Activated CD4-positive, alpha-beta T cell treated with anti-CD3 and anti-CD28 coated beads for 36 hours (primary cell): ENCODE measurements at regions of chr2 and their contacts with region 1.

Region 1: GRCh38 chr2:84881581-84882414 is 914 bp upstream of the TRABD2A start:
- DNase-seq: peak; percentile 95
- ATAC-seq: peak; percentile 75
- H3K4me3 Mint-ChIP-seq: peak overlapping the region; percentile 82
- H3K27ac Mint-ChIP-seq: peak overlapping the region; percentile 91
- H3K4me1 Mint-ChIP-seq: peaks cover 58% of the 10 kb centered on the region
- H3K27me3 Mint-ChIP-seq: no peaks in the 10 kb centered on the region

Region 2: GRCh38 chr2:84459018-84459943 is 422.5 kb before region 1 on chr2 and contains the start of gene SUCLG1:
- CTCF ChIA-PET with region 1: no interaction called
- POLR2A ChIA-PET with region 1: interaction called, 3 read pairs
- intact Hi-C with region 1: loop called in 1 of 2 experiments (anchors 1 kb)
- DNase-seq: peak; percentile 92
- ATAC-seq: peak; percentile 93
- H3K4me3 Mint-ChIP-seq: peak within 1 kb of the TSS; percentile 94
- H3K27ac Mint-ChIP-seq: peak within 1 kb of the TSS; percentile 98
- H3K4me1 Mint-ChIP-seq: peaks cover 34% of the 10 kb centered on the region
- H3K27me3 Mint-ChIP-seq: no peaks in the 10 kb centered on the region
- total RNA-seq, gene SUCLG1: 60.7 to 68.9 TPM

Region 3: GRCh38 chr2:84516234-84516986 is 365.4 kb before region 1 on chr2 and contains the start of gene DNAH6:
- CTCF ChIA-PET with region 1: no interaction called
- POLR2A ChIA-PET with region 1: no interaction called
- intact Hi-C with region 1: loop called (anchors 5 kb)
- DNase-seq: peak; percentile 93
- ATAC-seq: peak; percentile 100
- H3K4me3 Mint-ChIP-seq: peak within 1 kb of the TSS; percentile 72
- H3K27ac Mint-ChIP-seq: peak within 1 kb of the TSS; percentile 30
- H3K4me1 Mint-ChIP-seq: peaks cover 11% of the 10 kb centered on the region
- H3K27me3 Mint-ChIP-seq: no peaks in the 10 kb centered on the region
- total RNA-seq, gene DNAH6: 1.1 to 1.3 TPM

Region 4: DNA sequence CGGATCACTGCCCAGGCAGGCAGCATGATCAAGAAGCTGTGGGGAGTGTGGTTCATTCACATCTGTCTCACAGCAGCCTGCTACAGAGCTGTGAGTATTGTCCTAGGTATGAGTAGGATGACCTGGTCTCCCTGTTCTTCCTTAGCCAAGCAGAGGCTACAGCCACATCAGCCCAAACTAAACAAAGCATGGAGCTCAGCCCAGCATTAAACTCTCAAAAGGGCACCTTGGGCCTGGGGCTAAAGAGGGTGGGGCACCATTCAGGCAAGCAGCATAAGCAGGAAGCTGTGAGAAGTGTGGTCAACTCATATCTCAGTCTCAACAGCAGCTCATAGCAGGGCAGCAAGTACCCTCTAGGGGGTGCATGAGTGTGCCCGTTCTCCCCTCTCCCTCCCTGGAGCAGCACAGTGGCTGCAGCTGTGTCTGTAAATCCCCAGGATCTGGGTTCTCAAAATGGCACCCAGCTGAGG is 140.5 kb before region 1 on chr2:
- CTCF ChIA-PET with region 1: interaction called, 12 read pairs
- POLR2A ChIA-PET with region 1: no interaction called
- intact Hi-C with region 1: loop called in 1 of 2 experiments (anchors 5 kb)
- DNase-seq: peak; percentile 70
- ATAC-seq: peak; percentile 100
- H3K4me3 Mint-ChIP-seq: no peak overlapping the region
- H3K27ac Mint-ChIP-seq: no peak overlapping the region
- H3K4me1 Mint-ChIP-seq: peaks cover 11% of the 10 kb centered on the region
- H3K27me3 Mint-ChIP-seq: no peaks in the 10 kb centered on the region

Region 5: DNA sequence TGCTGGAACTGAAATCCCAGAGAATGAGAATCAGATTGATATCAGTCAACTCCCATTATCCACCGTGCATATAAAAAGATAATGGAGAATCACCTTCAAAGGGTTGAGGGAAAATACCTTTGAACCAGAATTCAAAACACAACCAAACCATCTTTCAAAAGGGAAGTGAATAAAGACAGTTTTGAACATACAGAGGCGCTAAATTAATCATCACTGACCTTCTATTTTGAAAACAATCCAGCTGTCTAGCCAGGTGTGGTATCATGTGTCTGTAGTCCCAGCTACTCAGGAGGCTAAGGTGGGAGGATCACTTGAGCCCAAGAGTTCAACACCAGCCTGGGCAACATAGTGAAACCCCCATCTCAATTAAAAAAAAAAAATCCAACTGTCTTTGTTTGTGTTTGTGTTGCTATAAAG is 64.6 kb before region 1 on chr2:
- CTCF ChIA-PET with region 1: interaction called, 5 read pairs
- POLR2A ChIA-PET with region 1: interaction called, 3 read pairs
- intact Hi-C with region 1: loop called (anchors 1 to 5 kb)
- DNase-seq: peak; percentile 36
- ATAC-seq: peak; percentile 85
- H3K4me3 Mint-ChIP-seq: peak overlapping the region; percentile 20
- H3K27ac Mint-ChIP-seq: no peak overlapping the region
- H3K4me1 Mint-ChIP-seq: peaks cover 52% of the 10 kb centered on the region
- H3K27me3 Mint-ChIP-seq: no peaks in the 10 kb centered on the region

Region 6: DNA sequence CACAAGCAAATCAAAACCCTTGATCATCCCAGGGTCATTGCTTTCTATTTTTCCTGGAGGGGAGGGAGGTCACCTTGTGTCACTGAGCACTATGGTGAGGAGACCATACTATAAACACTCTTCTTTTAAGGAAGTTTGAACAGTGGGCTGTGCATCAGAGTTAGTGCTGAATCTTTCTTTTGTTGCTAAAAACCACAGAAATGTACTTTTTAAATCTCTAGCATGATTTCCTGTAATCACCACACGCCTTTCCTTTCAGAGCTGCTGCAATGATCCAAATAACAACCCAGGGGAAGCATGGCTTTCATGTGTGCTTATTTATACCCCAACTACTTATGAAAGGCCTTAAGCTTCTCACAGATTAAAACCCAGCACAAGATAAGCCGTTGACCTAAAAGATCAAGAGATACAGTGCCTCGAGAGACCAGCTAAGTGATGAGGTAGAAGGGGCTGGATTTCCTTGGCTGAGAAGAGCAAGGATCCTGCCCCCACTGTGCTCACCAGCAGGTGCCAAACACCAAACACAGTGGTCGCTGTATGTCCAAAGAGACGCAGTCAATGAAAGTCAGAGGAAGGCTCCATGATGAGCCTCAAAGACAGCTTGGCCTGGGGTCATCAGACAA is 35.6 kb before region 1 on chr2:
- CTCF ChIA-PET with region 1: interaction called, 7 read pairs
- POLR2A ChIA-PET with region 1: interaction called, 3 read pairs
- intact Hi-C with region 1: loop called (anchors 2 to 5 kb)
- DNase-seq: peak; percentile 47
- ATAC-seq: peak; percentile 52
- H3K4me3 Mint-ChIP-seq: peak overlapping the region; percentile 12
- H3K27ac Mint-ChIP-seq: peak overlapping the region; percentile 94
- H3K4me1 Mint-ChIP-seq: peaks cover 93% of the 10 kb centered on the region
- H3K27me3 Mint-ChIP-seq: no peaks in the 10 kb centered on the region

Region 7: DNA sequence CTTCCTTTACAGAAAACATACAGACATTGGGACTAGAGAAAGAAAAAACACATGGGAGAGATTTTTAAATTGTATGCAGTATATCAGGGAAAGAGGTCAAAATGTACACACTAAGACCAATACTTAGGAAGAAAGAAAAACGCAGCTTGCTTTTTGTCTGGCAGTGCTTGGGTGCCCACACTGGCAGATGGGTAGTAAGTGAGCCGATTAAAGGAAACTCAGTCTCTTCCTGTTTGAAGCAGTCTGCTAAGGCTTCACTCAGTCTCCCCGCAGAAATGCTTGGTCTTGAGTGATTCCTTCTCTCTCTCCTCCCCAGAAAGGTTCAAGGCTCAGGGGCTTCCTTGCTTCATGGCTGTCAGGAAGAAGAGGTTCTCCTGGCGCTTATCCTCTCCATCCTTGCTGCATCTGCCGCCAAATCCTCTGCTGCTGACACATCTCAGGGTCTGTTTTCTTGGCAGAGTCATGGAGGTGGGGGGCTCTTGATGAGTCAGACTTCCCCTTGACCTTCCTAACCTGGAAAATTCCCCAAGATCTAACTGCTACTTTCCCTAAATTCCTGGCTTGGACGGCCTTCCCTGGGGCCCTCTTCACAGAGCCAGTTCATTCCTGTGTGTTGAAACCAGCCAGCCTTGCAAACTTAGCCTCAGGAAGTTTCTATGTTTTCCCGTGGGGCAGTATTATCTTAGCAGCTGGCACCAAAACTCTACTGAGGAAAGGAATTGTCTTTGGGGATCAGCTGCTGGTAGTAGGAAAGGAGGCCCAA is 13.1 kb after region 1 on chr2:
- CTCF ChIA-PET with region 1: interaction called, 21 read pairs
- POLR2A ChIA-PET with region 1: no interaction called
- intact Hi-C with region 1: no loop called
- DNase-seq: peak; percentile 39
- ATAC-seq: peak; percentile 35
- H3K4me3 Mint-ChIP-seq: peak overlapping the region; percentile 13
- H3K27ac Mint-ChIP-seq: peak overlapping the region; percentile 68
- H3K4me1 Mint-ChIP-seq: peaks cover 63% of the 10 kb centered on the region
- H3K27me3 Mint-ChIP-seq: no peaks in the 10 kb centered on the region

Region 8: GRCh38 chr2:85042330-85042729 is 160.5 kb after region 1 on chr2:
- CTCF ChIA-PET with region 1: no interaction called
- POLR2A ChIA-PET with region 1: no interaction called
- intact Hi-C with region 1: no loop called
- DNase-seq: no peak
- ATAC-seq: no peak
- H3K4me3 Mint-ChIP-seq: no peak overlapping the region
- H3K27ac Mint-ChIP-seq: no peak overlapping the region
- H3K4me1 Mint-ChIP-seq: no peaks in the 10 kb centered on the region
- H3K27me3 Mint-ChIP-seq: no peaks in the 10 kb centered on the region

Region 9: DNA sequence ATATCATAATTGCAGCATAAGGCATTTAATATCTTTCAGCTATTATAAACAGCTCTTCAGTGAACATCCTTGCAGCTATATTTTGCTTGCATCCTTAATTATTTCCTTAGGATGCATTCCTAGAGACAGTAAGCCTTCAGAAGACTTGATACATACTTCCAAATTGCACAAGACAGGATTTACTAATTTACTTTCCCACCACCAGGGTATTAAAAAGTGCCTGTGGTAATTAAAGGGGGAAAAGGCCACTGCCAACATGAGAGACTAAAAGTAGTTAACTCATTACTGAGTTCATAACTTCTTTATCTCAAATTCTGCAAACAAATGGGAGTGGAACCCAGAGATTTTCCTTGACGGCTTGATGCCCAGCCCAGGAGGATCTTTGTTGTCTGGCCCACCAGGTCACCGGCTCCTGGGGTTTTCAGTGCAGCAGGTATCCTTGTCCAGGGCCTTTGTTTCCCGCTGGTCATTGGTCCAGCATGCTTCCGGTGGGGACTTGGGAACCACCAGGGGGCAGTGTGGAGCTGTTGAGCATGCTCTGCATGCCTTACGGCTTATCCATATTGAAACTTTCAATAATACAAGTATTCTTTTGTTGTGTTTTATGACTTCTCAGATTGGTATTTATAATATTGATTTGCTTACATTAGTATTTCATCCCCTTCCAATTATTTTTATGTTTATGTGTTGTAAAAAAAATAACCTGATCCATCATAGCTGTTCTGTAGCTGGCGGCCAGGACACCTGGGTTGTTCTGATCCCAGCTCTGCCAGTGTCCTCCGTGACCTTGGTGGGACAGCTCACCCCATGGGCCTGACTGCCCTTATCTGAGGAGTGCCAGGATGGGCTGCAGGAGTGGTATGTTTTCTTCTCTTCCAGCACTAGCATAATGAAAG is 384.6 kb after region 1 on chr2:
- CTCF ChIA-PET with region 1: no interaction called
- POLR2A ChIA-PET with region 1: no interaction called
- intact Hi-C with region 1: no loop called
- DNase-seq: peak; percentile 88
- ATAC-seq: peak; percentile 89
- H3K4me3 Mint-ChIP-seq: no peak overlapping the region
- H3K27ac Mint-ChIP-seq: no peak overlapping the region
- H3K4me1 Mint-ChIP-seq: no peaks in the 10 kb centered on the region
- H3K27me3 Mint-ChIP-seq: no peaks in the 10 kb centered on the region